ENCODE measurements at regions of chr10 and their contacts with region 1.

Region 1: GRCh38 chr10:123351715-123352114 is 197.5 kb downstream of the BUB3 start:
- DNase-seq: no peak
- H3K4me3 ChIP-seq: no peak overlapping the region
- H3K27ac ChIP-seq: no peak overlapping the region
- H3K4me1 ChIP-seq: no peaks in the 10 kb centered on the region
- H3K27me3 ChIP-seq: no peaks in the 10 kb centered on the region
- CTCF ChIP-seq: no peak
- EP300 ChIP-seq: no peak
- POLR2A ChIP-seq: no peak

Region 2: GRCh38 chr10:123404357-123404756 is 52.6 kb after region 1 on chr10:
- intact Hi-C with region 1: loop called (anchors 2 kb)
- DNase-seq: no peak
- H3K4me3 ChIP-seq: no peak overlapping the region
- H3K27ac ChIP-seq: no peak overlapping the region
- H3K4me1 ChIP-seq: no peaks in the 10 kb centered on the region
- H3K27me3 ChIP-seq: no peaks in the 10 kb centered on the region
- CTCF ChIP-seq: no peak
- EP300 ChIP-seq: no peak
- POLR2A ChIP-seq: no peak

Region 3: GRCh38 chr10:123721430-123722257 is 369.9 kb after region 1 on chr10:
- intact Hi-C with region 1: no loop called
- DNase-seq: no peak
- H3K4me3 ChIP-seq: no peak overlapping the region
- H3K27ac ChIP-seq: no peak overlapping the region
- H3K4me1 ChIP-seq: no peaks in the 10 kb centered on the region
- H3K27me3 ChIP-seq: no peaks in the 10 kb centered on the region
- CTCF ChIP-seq: no peak
- EP300 ChIP-seq: no peak
- POLR2A ChIP-seq: no peak

Measured in sigmoid colon (tissue), 7 donors.